ENCODE measurements at regions of chr1 and their contacts with region 1.

Region 1: DNA sequence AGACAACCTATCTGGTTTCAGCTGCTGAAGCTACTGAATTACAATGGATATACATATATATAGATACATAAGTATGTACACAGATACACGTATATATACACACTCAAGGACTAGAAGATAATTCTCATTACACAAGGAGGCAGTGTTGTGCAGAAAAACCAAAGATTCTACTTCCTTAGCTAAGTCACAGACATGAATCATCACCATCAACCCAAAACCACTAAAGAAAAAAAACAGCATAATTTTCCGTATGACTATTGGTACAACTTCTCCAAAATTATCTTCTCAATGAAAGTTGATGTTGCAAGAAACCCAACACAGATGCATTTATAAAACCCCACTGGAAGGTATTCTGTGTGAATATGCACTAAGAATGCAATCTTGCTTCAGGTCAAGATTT is 36.8 kb upstream of the RPF1 start:
- DNase-seq: peak in 1 of 2 donors; percentile 87
- ATAC-seq: peak; percentile 98 to 99 (median 99)
- H3K4me3 ChIP-seq: no peak overlapping the region
- H3K4me3 Mint-ChIP-seq: peak overlapping the region; percentile 66
- H3K27ac ChIP-seq: no peak overlapping the region
- H3K27ac Mint-ChIP-seq: peak overlapping the region; percentile 49 to 60
- H3K4me1 ChIP-seq: peaks cover 20% of the 10 kb centered on the region
- H3K4me1 Mint-ChIP-seq: peaks cover 7 to 10% of the 10 kb centered on the region in 2 donors
- H3K27me3 ChIP-seq: no peaks in the 10 kb centered on the region
- H3K27me3 Mint-ChIP-seq: peaks cover 11% of the 10 kb centered on the region in 2 donors
- CTCF ChIP-seq: peak; percentile 65

Region 2: DNA sequence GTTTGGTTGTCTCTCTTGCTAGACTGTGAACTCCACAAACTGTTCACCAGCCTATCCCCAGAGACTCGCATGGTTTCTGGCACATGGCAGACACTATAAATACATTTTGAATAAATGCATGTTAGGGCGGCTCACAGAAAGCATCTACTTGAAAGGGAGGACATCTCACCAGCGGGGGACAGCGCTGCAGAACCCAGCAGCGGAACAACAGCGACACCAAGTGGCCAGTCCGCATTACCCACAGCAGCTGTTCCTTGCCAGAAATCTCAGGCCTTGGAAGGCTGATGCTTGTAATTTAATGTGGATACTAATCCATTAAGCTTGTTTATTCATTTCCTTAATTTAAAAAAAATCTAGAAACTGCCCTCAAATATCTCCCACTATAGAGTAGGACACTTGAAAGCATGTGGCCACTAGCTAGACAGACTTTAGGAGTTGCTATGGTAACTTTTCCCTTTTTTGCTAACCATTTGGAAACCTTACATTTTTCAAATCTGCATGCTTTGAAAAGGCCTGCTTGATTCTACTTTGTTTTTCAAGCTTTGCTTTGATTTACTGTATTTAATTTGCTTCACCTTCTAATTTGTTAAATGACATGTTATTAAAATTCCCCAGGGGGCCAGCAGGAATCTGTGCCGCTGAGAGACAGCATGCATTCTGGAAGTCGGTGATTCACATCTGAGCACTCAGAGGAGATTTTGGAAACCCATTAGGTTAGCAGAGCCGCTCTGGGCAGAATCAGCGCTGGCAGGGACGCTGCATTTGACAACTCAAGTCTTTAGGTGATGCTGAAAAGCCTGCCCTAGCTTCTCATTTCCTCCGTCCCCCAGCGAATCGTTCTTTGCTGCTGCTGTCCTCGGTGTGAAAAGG is 311.5 kb after region 1 on chr1:
- intact Hi-C with region 1: loop called (anchors 1 kb)
- DNase-seq: peak; percentile 69 to 87
- ATAC-seq: peak; percentile 83 to 97 (median 96)
- H3K4me3 ChIP-seq: no peak overlapping the region
- H3K4me3 Mint-ChIP-seq: no peak overlapping the region
- H3K27ac ChIP-seq: no peak overlapping the region
- H3K27ac Mint-ChIP-seq: no peak overlapping the region
- H3K4me1 ChIP-seq: no peaks in the 10 kb centered on the region
- H3K4me1 Mint-ChIP-seq: peaks cover 4 to 5% of the 10 kb centered on the region in 2 donors
- H3K27me3 ChIP-seq: peaks cover 6% of the 10 kb centered on the region
- H3K27me3 Mint-ChIP-seq: peaks cover 10 to 37% of the 10 kb centered on the region in 2 donors
- CTCF ChIP-seq: peak; percentile 92

Region 3: DNA sequence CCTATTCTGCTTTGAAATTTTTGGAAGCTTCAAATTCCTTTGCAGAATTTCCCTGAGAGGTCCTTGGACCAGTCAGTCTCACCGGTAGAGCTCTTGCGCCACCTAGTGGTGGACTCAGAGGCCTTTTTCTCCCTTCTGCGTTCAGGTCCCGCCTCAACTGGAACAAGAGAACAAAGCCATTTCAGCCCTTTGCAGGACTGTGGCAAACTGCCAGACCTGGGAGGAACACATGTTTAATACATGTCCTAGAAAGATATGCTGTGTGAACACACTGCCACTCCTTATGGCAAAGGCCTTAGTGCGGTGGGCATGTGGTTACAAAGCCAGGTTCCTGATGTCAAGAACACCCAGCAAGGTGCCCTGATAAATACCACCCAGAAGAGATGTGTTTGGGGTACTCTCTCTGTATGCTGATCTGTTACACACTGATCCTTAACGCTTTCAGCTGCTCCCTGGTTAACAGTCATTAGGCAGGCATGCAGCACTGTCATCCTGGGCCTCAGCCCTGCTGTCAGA is 330.2 kb after region 1 on chr1:
- intact Hi-C with region 1: loop called (anchors 1 kb)
- DNase-seq: peak; percentile 68 to 84
- ATAC-seq: peak; percentile 65 to 83 (median 82)
- H3K4me3 ChIP-seq: no peak overlapping the region
- H3K4me3 Mint-ChIP-seq: no peak overlapping the region
- H3K27ac ChIP-seq: no peak overlapping the region
- H3K27ac Mint-ChIP-seq: no peak overlapping the region
- H3K4me1 ChIP-seq: no peaks in the 10 kb centered on the region
- H3K4me1 Mint-ChIP-seq: no peaks in the 10 kb centered on the region
- H3K27me3 ChIP-seq: no peaks in the 10 kb centered on the region
- H3K27me3 Mint-ChIP-seq: peaks cover 11 to 15% of the 10 kb centered on the region in 2 donors
- CTCF ChIP-seq: peak; percentile 98

Region 4: DNA sequence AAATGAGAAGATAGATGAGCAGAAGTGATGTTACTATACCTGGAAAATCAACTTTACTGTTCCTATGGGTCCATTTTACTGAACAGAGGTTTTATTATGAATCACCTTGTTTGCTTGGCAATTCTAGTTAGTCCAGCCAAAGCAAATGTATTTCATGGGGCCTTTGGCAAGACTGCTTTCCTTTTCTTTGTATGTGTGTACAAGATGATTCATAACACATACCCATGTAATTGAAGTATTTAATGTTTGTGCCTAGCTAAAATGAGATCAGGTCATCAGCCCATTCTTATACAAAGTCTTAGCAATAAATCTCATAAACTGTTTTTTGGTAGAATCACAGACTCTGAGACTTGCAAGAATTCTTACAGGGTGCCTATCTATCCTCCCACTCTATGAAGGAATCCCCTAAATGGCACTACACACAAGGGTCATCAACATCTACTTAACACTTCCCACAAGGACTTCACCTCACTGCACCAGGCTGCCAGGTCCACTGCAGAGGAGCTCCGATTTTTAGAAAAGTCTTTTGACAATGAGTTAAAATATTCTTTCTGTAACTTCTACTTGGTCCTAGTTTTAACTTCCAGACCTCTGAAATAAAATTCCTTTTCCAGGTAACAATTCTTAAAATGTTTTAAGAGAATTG is 392.3 kb after region 1 on chr1:
- intact Hi-C with region 1: no loop called
- DNase-seq: no peak
- ATAC-seq: no peak
- H3K4me3 ChIP-seq: no peak overlapping the region
- H3K4me3 Mint-ChIP-seq: no peak overlapping the region
- H3K27ac ChIP-seq: no peak overlapping the region
- H3K27ac Mint-ChIP-seq: no peak overlapping the region
- H3K4me1 ChIP-seq: no peaks in the 10 kb centered on the region
- H3K4me1 Mint-ChIP-seq: no peaks in the 10 kb centered on the region
- H3K27me3 ChIP-seq: no peaks in the 10 kb centered on the region
- H3K27me3 Mint-ChIP-seq: peaks cover 11 to 18% of the 10 kb centered on the region in 2 donors
- CTCF ChIP-seq: no peak

Region 5: DNA sequence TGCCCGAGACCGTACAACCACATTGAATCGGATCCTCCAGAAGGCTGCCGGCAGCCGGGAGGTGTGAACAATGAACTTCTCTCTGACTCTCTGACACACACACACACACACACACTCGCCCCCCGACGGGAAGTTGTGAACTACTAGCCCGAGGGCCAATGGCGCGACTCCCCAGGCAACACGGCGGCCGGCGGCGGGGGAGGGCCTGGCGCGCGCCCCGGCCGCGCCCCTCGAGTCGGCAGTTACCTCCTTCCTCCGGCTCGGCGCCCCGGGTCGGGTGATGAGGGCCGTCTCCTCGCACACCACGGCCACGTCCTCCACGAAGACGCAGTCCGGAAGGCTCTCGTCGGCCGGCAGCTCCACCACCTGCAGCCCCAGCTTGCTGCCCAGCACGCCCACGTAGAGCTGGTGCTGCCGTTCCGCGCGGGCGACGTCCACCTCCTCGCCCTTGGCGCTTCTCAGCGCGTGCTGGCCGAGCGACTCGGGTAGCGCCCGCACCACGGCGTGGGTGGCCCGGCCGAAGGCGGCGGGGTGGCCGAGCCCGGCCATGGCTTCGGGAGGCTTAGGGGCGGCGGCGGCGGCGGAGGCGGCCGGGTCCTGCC is 1022.3 kb after region 1 on chr1:
- intact Hi-C with region 1: no loop called
- DNase-seq: peak in 1 of 2 donors; percentile 5
- ATAC-seq: peak; percentile 61 to 76 (median 70)
- H3K4me3 ChIP-seq: no peak overlapping the region
- H3K4me3 Mint-ChIP-seq: peak overlapping the region; percentile 17
- H3K27ac ChIP-seq: no peak overlapping the region
- H3K27ac Mint-ChIP-seq: no peak overlapping the region
- H3K4me1 ChIP-seq: peaks cover 8% of the 10 kb centered on the region
- H3K4me1 Mint-ChIP-seq: no peaks in the 10 kb centered on the region
- H3K27me3 ChIP-seq: peaks cover 11% of the 10 kb centered on the region
- H3K27me3 Mint-ChIP-seq: peaks cover 39 to 50% of the 10 kb centered on the region in 2 donors
- CTCF ChIP-seq: no peak

Measured in natural killer cell (primary cell).